OCI-LY7 (cell line): ENCODE measurements at regions of chr5 and their contacts with region 1.

Region 1: DNA sequence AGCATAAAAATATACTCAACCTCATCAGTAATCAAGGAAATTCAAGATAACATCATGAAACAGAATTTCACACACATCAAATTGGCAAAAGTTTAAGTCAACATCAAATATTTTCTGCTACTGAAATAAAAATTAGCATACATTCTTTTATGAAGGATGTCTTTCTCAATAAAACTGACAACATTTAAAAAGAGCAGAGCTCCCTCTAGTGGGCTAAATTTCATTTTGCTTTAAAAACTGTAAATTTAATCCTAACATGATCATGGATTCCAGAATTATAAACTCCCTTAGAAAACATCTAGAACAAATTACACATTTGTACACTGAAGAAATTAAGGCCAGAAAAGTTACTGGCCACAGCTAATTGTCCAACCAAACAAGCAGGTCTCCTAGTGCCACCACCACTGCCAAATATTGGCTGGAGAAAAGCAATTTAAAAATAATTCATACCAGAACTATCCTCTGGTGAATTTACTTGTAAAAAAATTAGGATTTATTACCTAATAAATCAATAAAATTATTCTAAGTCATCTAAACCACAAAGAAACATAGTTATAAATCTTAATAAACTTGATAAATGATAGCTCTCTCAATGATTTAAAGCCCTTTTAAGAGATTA is 31.2 kb downstream of the DEPDC1B start:
- DNase-seq: peak; percentile 58
- H3K4me3 ChIP-seq: no peak overlapping the region
- H3K27ac ChIP-seq: no peak overlapping the region
- H3K4me1 ChIP-seq: no peaks in the 10 kb centered on the region
- CTCF ChIP-seq: peak; percentile 93

Region 2: GRCh38 chr5:59620535-59621212 is 1048.1 kb before region 1 on chr5:
- CTCF ChIA-PET with region 1: no interaction called
- POLR2A ChIA-PET with region 1: no interaction called
- intact Hi-C with region 1: no loop called
- DNase-seq: peak; percentile 8
- H3K4me3 ChIP-seq: no peak overlapping the region
- H3K27ac ChIP-seq: peak overlapping the region; percentile 1
- H3K4me1 ChIP-seq: peaks cover 20% of the 10 kb centered on the region
- CTCF ChIP-seq: 0 out of 2 replicates have a peak, but pooled peaks have one; percentile 15

Region 3: GRCh38 chr5:60343102-60343501 is 325.7 kb before region 1 on chr5:
- CTCF ChIA-PET with region 1: no interaction called
- POLR2A ChIA-PET with region 1: no interaction called
- intact Hi-C with region 1: no loop called
- DNase-seq: no peak
- H3K4me3 ChIP-seq: no peak overlapping the region
- H3K27ac ChIP-seq: no peak overlapping the region
- H3K4me1 ChIP-seq: no peaks in the 10 kb centered on the region
- CTCF ChIP-seq: no peak

Region 4: GRCh38 chr5:60630179-60630578 is 38.6 kb before region 1 on chr5:
- CTCF ChIA-PET with region 1: no interaction called
- POLR2A ChIA-PET with region 1: no interaction called
- intact Hi-C with region 1: loop called (anchors 2 kb)
- DNase-seq: no peak
- H3K4me3 ChIP-seq: no peak overlapping the region
- H3K27ac ChIP-seq: no peak overlapping the region
- H3K4me1 ChIP-seq: no peaks in the 10 kb centered on the region
- CTCF ChIP-seq: no peak